ENCODE measurements at regions of chr10 and their contacts with region 1.

Region 1: GRCh38 chr10:80453701-80454513 is at the start of gene TSPAN14:
- DNase-seq: peak; percentile 88
- ATAC-seq: peak; percentile 79
- H3K4me3 ChIP-seq: peak within 1 kb of the TSS; percentile 58 to 92 (median 77)
- H3K4me3 Mint-ChIP-seq: peak within 1 kb of the TSS; percentile 94
- H3K27ac ChIP-seq: peak within 1 kb of the TSS; percentile 62 to 83
- H3K27ac Mint-ChIP-seq: peak within 1 kb of the TSS; percentile 94
- H3K4me1 ChIP-seq: peaks cover 31 to 47% of the 10 kb centered on the region in 2 donors
- H3K4me1 Mint-ChIP-seq: peaks cover 47% of the 10 kb centered on the region
- H3K27me3 ChIP-seq: no peaks in the 10 kb centered on the region
- H3K27me3 Mint-ChIP-seq: no peaks in the 10 kb centered on the region
- CTCF ChIP-seq: no peak
- total RNA-seq, gene TSPAN14: 54.9 and 55.3 TPM in 2 replicates

Region 2: DNA sequence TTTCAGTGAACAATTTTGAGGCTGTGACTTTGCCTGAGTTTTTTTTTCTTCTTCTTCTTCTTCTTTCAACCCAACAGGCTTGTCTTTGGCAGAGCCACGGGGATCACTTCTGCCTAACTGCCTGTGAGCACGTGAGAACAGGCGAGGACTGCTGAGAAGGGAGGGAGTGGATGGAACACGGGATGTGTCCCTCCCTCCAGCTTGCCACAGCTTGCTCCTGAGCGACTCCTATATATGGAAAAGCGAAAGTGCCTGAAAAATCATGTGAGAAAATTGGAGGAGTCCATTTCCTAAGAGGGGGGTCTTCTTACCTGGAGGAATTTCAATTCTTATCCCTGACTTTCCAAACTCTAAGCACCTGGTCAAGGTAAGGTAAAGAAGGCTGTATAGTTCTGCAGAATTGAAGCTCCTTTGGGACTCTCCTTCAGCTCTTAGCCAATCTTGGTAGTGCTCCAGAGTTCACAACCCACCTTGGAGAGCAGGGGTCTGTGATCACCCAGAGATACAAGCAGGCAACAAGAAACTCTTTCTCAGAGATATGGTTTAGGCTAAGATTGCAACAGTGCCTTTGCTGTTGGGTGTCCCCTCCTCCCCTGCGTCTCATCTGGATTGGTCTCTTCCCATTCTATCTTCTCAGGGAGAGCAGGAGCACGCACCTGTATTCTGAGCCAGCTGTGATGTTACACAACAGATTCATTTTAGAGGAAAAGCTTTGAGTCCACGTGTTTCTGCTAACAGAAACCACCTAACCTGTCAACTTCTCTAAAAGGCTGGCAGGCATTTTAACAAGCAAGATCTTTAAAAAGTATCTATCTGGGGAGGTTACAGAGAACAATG is 164.2 kb before region 1 on chr10 and contains the start of gene MAT1A:
- CTCF ChIA-PET with region 1: no interaction called
- POLR2A ChIA-PET with region 1: no interaction called
- intact Hi-C with region 1: no loop called
- DNase-seq: no peak
- ATAC-seq: no peak
- H3K4me3 ChIP-seq: no peak within 1 kb of the TSS
- H3K4me3 Mint-ChIP-seq: no peak within 1 kb of the TSS
- H3K27ac ChIP-seq: no peak within 1 kb of the TSS
- H3K27ac Mint-ChIP-seq: no peak within 1 kb of the TSS
- H3K4me1 ChIP-seq: no peaks in the 10 kb centered on the region
- H3K4me1 Mint-ChIP-seq: no peaks in the 10 kb centered on the region
- H3K27me3 ChIP-seq: peaks cover 0 to 6% (median 0%) of the 10 kb centered on the region in 4 experiments
- H3K27me3 Mint-ChIP-seq: peaks cover 34% of the 10 kb centered on the region
- CTCF ChIP-seq: no peak
- total RNA-seq, gene MAT1A: not detected in 2 replicates

Region 3: DNA sequence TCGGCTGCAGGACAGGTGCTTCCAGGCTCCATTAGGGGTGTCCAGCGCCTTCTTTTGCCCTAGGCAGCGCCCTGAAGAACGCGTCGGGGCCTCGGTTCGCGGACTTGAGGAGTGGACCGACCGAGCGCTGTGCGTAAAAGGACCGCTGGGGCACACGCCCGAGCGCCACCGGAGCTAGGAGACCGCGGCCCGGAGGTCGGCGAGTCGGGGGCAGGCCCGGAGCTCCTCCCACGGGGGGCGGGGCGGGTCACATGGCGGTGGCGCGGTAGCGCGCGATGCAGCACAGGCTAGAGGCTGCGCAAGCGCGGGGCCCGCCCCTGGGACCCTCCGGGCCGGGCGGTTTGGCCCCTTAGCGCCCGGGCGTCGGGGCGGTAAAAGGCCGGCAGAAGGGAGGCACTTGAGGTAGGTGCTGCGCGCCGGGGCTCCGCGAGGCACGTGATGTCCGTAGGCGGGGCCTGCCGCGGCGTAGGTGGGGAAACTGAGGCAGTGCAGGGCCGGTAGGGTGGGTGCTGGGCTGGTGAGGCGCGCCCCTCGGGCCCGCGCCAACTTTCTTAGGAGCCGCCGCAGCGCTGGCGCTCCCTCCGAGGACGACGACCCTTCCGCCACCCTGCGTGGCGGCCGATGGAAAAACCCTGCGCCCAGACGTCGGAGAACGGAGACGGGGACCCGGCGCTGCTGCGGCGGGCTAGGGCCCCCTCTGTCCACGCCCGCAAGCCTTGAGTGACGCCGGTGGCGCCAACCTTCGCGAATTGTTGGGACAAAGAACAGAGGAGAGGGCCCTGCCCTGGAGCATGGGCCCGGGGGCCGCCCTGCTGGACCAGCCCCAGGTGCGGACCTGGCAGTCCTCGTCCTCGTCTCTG is 45.4 kb before region 1 on chr10 and contains the start of gene PRXL2A:
- CTCF ChIA-PET with region 1: interaction called, 5 read pairs
- POLR2A ChIA-PET with region 1: interaction called, 3 read pairs
- intact Hi-C with region 1: loop called (anchors 1 kb)
- DNase-seq: peak; percentile 83
- ATAC-seq: peak; percentile 98
- H3K4me3 ChIP-seq: peak within 1 kb of the TSS; percentile 55 to 82 (median 77)
- H3K4me3 Mint-ChIP-seq: peak within 1 kb of the TSS; percentile 91
- H3K27ac ChIP-seq: peak within 1 kb of the TSS in 1 of 2 donors; percentile 13
- H3K27ac Mint-ChIP-seq: peak within 1 kb of the TSS; percentile 64
- H3K4me1 ChIP-seq: peaks cover 6 to 15% of the 10 kb centered on the region in 2 donors
- H3K4me1 Mint-ChIP-seq: peaks cover 13% of the 10 kb centered on the region
- H3K27me3 ChIP-seq: no peaks in the 10 kb centered on the region
- H3K27me3 Mint-ChIP-seq: peaks cover 5% of the 10 kb centered on the region
- CTCF ChIP-seq: no peak
- total RNA-seq, gene PRXL2A: 9.4 and 11.2 TPM in 2 replicates

Region 4: GRCh38 chr10:80472234-80473095 is 18.6 kb after region 1 on chr10:
- CTCF ChIA-PET with region 1: interaction called, 6 read pairs
- POLR2A ChIA-PET with region 1: interaction called, 13 read pairs
- intact Hi-C with region 1: loop called (anchors 2 kb)
- DNase-seq: peak; percentile 63
- ATAC-seq: peak; percentile 88
- H3K4me3 ChIP-seq: no peak overlapping the region
- H3K4me3 Mint-ChIP-seq: peak overlapping the region; percentile 60
- H3K27ac ChIP-seq: peak overlapping the region; percentile 49 to 75
- H3K27ac Mint-ChIP-seq: peak overlapping the region; percentile 89
- H3K4me1 ChIP-seq: peaks cover 41 to 48% of the 10 kb centered on the region in 2 donors
- H3K4me1 Mint-ChIP-seq: peaks cover 61% of the 10 kb centered on the region
- H3K27me3 ChIP-seq: no peaks in the 10 kb centered on the region
- H3K27me3 Mint-ChIP-seq: no peaks in the 10 kb centered on the region
- CTCF ChIP-seq: no peak

Region 5: GRCh38 chr10:80567291-80567690 is 113.4 kb after region 1 on chr10:
- CTCF ChIA-PET with region 1: no interaction called
- POLR2A ChIA-PET with region 1: no interaction called
- intact Hi-C with region 1: no loop called
- DNase-seq: no peak
- ATAC-seq: no peak
- H3K4me3 ChIP-seq: no peak overlapping the region
- H3K4me3 Mint-ChIP-seq: no peak overlapping the region
- H3K27ac ChIP-seq: no peak overlapping the region
- H3K27ac Mint-ChIP-seq: no peak overlapping the region
- H3K4me1 ChIP-seq: no peaks in the 10 kb centered on the region
- H3K4me1 Mint-ChIP-seq: no peaks in the 10 kb centered on the region
- H3K27me3 ChIP-seq: no peaks in the 10 kb centered on the region
- H3K27me3 Mint-ChIP-seq: peaks cover 5% of the 10 kb centered on the region
- CTCF ChIP-seq: no peak

Measured in B cell (primary cell).